CD14-positive monocyte (primary cell): ENCODE measurements at regions of chr9 and their contacts with region 1.

Region 1: DNA sequence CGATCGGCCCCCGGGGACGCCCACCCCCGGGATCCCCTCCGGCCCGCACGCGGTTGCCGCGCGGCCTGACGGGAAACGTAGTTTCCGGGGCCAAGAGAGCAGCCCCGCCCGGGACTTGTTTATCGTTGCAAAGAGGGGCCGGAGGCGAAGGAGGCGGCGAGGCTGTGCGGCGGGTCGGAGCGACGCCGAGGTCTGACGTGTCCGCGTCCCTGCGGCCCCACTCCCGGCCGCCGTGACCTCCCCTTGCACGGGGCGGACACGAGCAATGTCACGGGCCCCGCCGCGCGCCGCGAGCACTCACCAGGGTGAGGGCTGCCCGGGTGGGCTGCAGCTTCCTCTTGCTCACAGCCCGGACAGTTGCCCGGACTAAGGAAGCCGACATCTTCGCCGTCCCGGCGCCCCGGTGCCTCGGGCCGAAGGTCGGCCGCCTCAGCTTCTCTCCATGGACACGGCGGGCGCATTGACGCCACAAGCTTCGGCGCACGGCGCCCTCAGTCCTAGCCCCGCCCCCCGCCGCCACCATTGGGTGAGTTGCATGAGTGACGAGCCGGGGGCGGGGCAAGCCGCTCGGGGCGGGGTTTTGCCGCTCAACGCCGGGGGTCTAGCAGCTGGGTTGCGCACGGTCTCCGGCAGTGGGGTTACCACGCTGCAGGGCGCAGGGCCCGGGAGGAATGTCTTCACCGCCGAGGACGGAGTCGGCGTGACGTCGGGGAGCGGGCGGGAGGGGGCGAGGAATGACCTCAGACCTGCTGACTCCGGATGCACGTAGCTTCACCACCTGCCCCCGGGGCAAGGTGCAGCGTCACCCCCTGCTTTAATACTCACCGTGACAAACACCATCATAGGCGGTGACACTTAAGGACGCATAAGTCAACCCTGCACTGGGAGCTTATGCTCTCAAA is at the start of gene ISCA1:
- DNase-seq: peak; percentile 87 to 89 (median 88)
- H3K4me3 ChIP-seq: peak within 1 kb of the TSS; percentile 58 to 91 (median 69)
- H3K4me3 Mint-ChIP-seq: peak within 1 kb of the TSS; percentile 93 to 98
- H3K27ac ChIP-seq: peak within 1 kb of the TSS; percentile 74 to 93
- H3K27ac Mint-ChIP-seq: peak within 1 kb of the TSS; percentile 92 to 98 (median 96)
- H3K4me1 ChIP-seq: peaks cover 14 to 21% of the 10 kb centered on the region in 2 donors
- H3K4me1 Mint-ChIP-seq: peaks cover 39% of the 10 kb centered on the region
- H3K27me3 ChIP-seq: no peaks in the 10 kb centered on the region
- H3K27me3 Mint-ChIP-seq: peaks cover 3 to 5% (median 4%) of the 10 kb centered on the region in 3 donors
- CTCF ChIP-seq: no peak
- polyA plus RNA-seq, gene ISCA1: 13.2 to 46.7 (median 36.9) TPM

Region 2: DNA sequence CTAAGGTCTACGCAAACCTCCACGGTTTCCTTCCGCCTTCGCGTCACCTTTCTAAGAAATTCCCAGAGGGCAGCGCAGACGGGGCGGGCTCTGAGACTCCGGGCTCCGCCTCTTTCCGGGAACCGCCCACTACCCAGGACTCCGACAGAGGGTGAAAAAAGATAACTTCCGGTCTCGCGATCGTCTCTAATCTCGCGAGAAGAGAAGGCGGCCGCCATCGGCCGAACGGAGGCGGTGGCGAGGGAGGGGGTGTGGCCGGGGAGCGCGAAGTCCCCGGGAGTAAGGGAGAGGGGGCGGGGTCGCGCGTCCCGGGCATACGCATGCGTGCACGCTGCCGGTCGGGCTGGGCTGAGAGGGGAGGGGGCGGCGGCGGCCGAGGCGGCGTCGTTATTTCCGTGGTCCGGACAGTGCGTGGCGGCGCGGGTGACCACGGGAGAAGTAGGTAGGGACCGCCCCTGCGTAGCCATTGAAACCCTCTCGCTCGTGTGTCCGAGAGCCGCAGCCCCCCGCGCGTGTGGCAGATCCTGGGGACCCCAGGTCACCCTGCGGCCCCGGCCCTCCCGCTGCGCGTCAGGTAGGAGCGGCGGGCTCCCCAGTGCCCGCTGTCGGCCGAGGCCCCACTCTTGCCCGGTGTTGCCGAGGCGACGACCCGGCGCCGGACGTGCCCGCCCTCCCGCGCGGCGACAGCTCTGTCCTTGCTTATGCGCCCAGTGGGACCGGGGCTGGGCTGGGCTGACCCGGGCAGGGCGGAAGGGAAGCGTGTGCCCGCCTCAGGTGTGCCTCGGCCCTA is 341.3 kb before region 1 on chr9 and contains the start of gene NAA35:
- intact Hi-C with region 1: loop called (anchors 5 kb)
- DNase-seq: peak; percentile 99
- H3K4me3 ChIP-seq: peak within 1 kb of the TSS; percentile 73 to 83 (median 79)
- H3K4me3 Mint-ChIP-seq: peak within 1 kb of the TSS; percentile 85 to 92
- H3K27ac ChIP-seq: peak within 1 kb of the TSS; percentile 66 to 77
- H3K27ac Mint-ChIP-seq: peak within 1 kb of the TSS; percentile 88 to 94 (median 93)
- H3K4me1 ChIP-seq: peaks cover 9 to 12% of the 10 kb centered on the region in 2 donors
- H3K4me1 Mint-ChIP-seq: peaks cover 10% of the 10 kb centered on the region
- H3K27me3 ChIP-seq: no peaks in the 10 kb centered on the region
- H3K27me3 Mint-ChIP-seq: peaks cover 0 to 18% (median 6%) of the 10 kb centered on the region in 3 donors
- CTCF ChIP-seq: no peak
- polyA plus RNA-seq, gene NAA35: 4.4 to 8.7 (median 5.6) TPM

Region 3: DNA sequence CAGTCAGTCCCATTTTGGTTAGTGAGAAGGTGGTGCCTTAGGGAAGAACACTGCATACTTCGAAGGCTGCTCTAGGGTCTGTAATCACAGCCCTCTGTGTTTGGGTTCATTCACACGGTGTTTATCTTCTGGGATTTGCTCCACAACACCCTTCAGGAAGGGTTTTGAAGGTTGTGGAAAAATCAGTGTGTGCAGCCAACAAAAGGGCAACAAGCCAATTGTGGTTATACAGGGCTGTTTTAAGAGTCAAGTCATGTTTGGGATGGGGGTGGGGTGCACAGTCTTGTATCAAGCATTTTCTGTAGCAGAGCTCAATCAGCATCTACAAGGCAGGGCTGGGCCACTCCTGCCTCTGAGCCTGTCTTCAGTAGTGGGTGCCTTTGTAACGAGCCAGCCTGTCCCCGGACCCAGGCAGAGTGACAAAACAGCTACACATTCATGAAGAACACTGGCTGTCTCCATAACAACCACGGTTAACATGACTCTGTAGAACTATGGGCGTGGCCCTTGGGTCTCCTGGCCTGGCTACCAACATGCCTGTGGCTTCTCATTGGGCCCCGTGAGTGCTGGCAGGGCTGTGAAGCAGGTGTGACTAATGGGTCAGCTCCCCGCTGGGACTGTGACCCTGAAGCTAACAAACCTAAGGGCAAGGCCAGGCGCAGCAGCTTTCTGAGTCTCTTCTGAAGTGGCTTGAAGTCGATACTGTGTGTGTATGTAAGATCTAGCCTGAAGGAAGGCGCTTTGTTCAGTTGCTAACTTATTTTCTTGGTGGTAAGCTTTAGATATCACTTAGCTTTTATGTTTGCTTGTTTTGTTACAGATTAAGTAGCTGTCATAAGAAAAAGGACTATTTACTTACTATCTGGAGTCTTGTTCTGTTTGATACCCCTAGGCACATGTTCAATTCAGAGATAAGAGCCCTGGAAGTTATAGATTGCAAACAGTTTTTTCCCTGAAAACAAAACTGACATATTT is 155.0 kb before region 1 on chr9:
- intact Hi-C with region 1: no loop called
- DNase-seq: no peak
- H3K4me3 ChIP-seq: no peak overlapping the region
- H3K4me3 Mint-ChIP-seq: peak overlapping the region in 1 of 2 donors; percentile 20
- H3K27ac ChIP-seq: no peak overlapping the region
- H3K27ac Mint-ChIP-seq: no peak overlapping the region
- H3K4me1 ChIP-seq: no peaks in the 10 kb centered on the region
- H3K4me1 Mint-ChIP-seq: no peaks in the 10 kb centered on the region
- H3K27me3 ChIP-seq: no peaks in the 10 kb centered on the region
- H3K27me3 Mint-ChIP-seq: peaks cover 3 to 9% (median 3%) of the 10 kb centered on the region in 3 donors
- CTCF ChIP-seq: no peak

Region 4: GRCh38 chr9:86337469-86338108 is 55.3 kb after region 1 on chr9:
- intact Hi-C with region 1: loop called in 1 of 2 experiments (anchors 10 kb)
- DNase-seq: peak; percentile 25 to 59 (median 34)
- H3K4me3 ChIP-seq: peak overlapping the region; percentile 30 to 70 (median 51)
- H3K4me3 Mint-ChIP-seq: peak overlapping the region; percentile 61 to 82
- H3K27ac ChIP-seq: peak overlapping the region; percentile 54 to 69
- H3K27ac Mint-ChIP-seq: peak overlapping the region; percentile 80 to 92 (median 87)
- H3K4me1 ChIP-seq: peaks cover 34 to 53% of the 10 kb centered on the region in 2 donors
- H3K4me1 Mint-ChIP-seq: peaks cover 50% of the 10 kb centered on the region
- H3K27me3 ChIP-seq: no peaks in the 10 kb centered on the region
- H3K27me3 Mint-ChIP-seq: no peaks in the 10 kb centered on the region
- CTCF ChIP-seq: no peak

Region 5: DNA sequence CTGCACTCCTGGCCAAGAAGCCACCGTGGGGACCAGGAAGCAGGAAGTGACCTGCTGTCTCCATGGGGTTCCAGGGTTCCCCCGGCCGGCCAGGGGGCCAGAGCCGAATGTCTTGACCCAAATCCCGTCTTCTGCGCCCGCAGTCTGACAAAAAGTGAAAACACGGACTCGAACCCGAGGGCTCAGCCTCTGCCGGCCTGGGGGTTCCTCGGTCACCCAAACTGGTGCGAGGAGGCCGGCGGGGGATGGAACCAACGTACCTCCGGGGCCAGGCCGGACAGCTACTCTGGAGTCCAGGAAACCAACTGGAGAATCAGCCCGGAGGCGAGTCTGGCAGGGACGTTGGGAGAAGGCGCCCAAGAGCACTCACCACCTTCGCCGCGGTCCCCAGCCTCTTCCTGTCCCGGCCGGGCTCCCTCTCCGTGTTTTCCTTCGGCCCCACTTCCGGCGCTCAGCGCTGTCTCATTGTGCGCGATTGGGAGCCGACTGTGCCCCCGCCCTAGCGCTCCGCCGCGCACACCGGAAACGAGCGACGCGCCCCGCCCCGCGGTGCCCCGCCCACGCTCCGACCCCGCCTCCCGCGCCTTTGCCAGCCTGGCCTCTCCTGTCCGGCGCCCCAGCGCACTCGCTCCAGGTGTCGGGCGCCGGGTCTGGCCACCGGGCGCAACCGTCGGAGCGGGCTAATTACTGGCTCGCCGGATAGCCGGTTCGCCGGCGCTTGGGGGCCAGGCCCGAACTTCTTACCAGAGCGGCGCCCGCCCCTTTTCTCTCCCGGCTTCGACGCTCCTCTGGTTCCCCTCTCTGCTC is 71.9 kb after region 1 on chr9 and contains the start of gene TUT7:
- intact Hi-C with region 1: loop called in 1 of 2 experiments (anchors 5 kb)
- DNase-seq: peak; percentile 92 to 93 (median 92)
- H3K4me3 ChIP-seq: peak within 1 kb of the TSS; percentile 90 to 99 (median 98)
- H3K4me3 Mint-ChIP-seq: peak within 1 kb of the TSS; percentile 99 to 100
- H3K27ac ChIP-seq: peak within 1 kb of the TSS; percentile 91 to 95
- H3K27ac Mint-ChIP-seq: peak within 1 kb of the TSS; percentile 95 to 99 (median 97)
- H3K4me1 ChIP-seq: peaks cover 58 to 71% of the 10 kb centered on the region in 2 donors
- H3K4me1 Mint-ChIP-seq: peaks cover 55% of the 10 kb centered on the region
- H3K27me3 ChIP-seq: no peaks in the 10 kb centered on the region
- H3K27me3 Mint-ChIP-seq: peaks cover 0 to 2% (median 0%) of the 10 kb centered on the region in 3 donors
- CTCF ChIP-seq: no peak
- polyA plus RNA-seq, gene TUT7: 14.2 to 51.6 (median 27.9) TPM